HepG2 (cell line): ENCODE measurements at regions of chr10 and their contacts with region 1.

Region 1: GRCh38 chr10:98474628-98475027 is 27.9 kb upstream of the HPS1 start:
- DNase-seq: no peak
- ATAC-seq: no peak
- H3K4me3 ChIP-seq: no peak overlapping the region
- H3K27ac ChIP-seq: no peak overlapping the region
- H3K4me1 ChIP-seq: no peaks in the 10 kb centered on the region
- H3K27me3 ChIP-seq: peaks cover 2 to 9% of the 10 kb centered on the region in 2 experiments; a peak in 2 of 5 replicates
- CTCF ChIP-seq: no peak
- EP300 ChIP-seq: no peak
- POLR2A ChIP-seq: no peak
- RAD21 ChIP-seq: no peak

Region 2: DNA sequence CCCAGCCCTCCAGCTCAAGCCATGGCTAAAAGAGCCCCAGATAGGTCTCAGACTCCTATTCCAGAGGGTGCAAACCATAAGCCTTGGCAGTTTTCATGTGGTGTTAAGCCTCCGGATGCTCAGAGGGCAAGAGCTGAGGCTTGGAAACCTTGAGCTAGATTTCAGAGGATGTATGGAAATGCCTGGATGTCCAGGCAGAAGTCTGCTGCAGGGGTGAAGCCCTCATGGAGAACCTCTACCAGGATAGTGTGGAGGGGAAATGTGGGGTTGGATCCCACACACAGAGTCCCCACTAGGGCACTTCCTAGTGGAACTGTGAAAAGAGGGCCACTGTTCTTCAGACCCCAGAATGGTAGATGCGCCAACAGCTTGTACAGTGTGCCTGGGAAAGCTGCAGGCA is 774.2 kb after region 1 on chr10:
- CTCF ChIA-PET with region 1: no interaction called
- POLR2A ChIA-PET with region 1: no interaction called
- in situ Hi-C with region 1: loop called (anchors 10 kb)
- intact Hi-C with region 1: no loop called
- DNase-seq: no peak
- ATAC-seq: no peak
- H3K4me3 ChIP-seq: no peak overlapping the region
- H3K27ac ChIP-seq: no peak overlapping the region
- H3K4me1 ChIP-seq: no peaks in the 10 kb centered on the region
- H3K27me3 ChIP-seq: no peaks in the 10 kb centered on the region
- CTCF ChIP-seq: no peak
- EP300 ChIP-seq: no peak
- POLR2A ChIP-seq: no peak
- RAD21 ChIP-seq: no peak